K562 (cell line): ENCODE measurements at regions of chr1 and their contacts with region 1.

Region 1: DNA sequence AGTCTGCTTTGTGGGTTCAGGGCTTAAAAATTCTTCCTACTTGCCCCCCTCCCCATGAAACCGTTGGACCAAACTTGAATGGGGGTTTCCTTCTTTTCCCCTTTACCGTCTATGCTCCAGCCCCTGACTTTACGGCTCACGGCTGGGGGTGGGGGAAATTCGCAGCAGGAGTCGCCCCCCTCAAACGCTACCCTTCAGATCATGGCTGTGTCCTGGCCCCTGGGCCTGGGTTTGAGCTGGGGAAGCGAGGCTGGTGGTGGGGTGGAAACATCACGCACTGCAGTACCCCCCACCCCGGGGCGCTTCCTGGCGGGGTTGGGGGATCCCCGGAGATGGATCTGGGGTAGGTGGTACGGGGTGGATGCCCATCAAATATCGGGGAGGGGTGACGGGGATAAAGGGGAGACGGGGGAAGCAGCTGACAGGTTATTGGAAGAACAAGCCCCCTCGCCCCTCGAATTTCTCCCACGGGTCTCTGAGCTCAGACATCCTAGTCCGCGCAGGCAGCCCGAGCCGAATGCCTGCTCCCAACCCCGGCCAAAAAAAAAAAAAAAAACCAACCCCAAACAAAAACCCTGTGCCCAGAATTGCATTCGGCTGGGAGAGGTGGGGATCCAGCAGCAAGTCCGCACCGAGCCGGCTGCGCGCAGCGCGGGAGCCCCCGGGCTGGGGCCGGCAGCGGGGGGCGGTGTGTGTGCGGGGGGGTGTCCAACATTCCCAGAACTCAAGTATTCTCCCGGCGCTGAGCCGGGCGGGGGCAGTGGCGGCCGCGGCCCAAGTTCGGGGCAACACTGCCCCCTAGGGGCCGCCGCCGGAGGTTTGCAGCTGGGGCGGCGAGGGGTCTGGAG is 59.0 kb upstream of the ACOT11 start:
- DNase-seq: peak; percentile 90 to 96 (median 94)
- ATAC-seq: peak; percentile 88
- H3K4me3 ChIP-seq: peak overlapping the region; percentile 59
- H3K27ac ChIP-seq: peak overlapping the region; percentile 94
- H3K4me1 ChIP-seq: peaks cover 11 to 39% of the 10 kb centered on the region in 2 experiments
- H3K27me3 ChIP-seq: peaks cover 0 to 2% of the 10 kb centered on the region in 2 experiments; a peak in 1 of 5 replicates
- CTCF ChIP-seq: peak; percentile 90 to 99 (median 95)
- EP300 ChIP-seq: peak; percentile 44
- POLR2A ChIP-seq: 0 out of 2 replicates have a peak, but pooled peaks have one; percentile 9
- RAD21 ChIP-seq: peak; percentile 99

Region 2: DNA sequence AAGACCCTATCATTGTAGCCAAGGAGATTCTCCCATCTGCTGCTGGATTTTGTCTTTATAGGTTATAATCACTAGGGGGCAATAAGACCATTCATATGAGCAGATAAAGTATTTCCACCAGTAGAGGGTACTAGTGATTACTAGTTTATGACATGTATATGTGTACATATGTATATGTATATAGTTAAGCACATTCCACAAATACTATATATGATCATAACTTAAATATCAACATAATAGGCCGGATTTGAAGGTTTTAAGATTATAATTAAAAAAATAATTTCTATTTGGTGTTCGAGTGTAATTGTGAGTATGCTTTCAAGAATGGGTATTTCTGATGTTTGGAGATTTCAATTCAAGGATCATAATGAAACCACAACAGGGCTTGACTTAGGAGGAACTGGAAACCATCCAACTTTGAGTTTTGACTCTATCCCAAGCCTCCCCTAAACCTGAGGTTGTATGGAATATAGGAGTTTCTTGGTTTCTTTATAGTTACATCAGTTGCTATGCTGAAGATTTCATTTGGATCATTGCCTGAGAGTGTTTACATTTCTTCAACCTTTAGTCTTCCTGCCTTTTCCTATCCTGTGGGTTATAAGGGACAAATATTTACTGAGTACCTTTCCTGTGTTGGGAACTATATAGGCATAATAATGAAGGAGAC is 418.7 kb before region 1 on chr1:
- CTCF ChIA-PET with region 1: interaction called, 17 read pairs
- POLR2A ChIA-PET with region 1: interaction called, 6 read pairs
- in situ Hi-C with region 1: no loop called
- intact Hi-C with region 1: loop called (anchors 1 kb)
- DNase-seq: peak; percentile 57 to 70 (median 64)
- ATAC-seq: peak; percentile 95
- H3K4me3 ChIP-seq: no peak overlapping the region
- H3K27ac ChIP-seq: no peak overlapping the region
- H3K4me1 ChIP-seq: peaks cover 5 to 8% of the 10 kb centered on the region in 2 experiments; a peak in 1 of 5 replicates
- H3K27me3 ChIP-seq: no peaks in the 10 kb centered on the region
- CTCF ChIP-seq: peak; percentile 79 to 100 (median 99)
- EP300 ChIP-seq: no peak
- POLR2A ChIP-seq: no peak
- RAD21 ChIP-seq: peak; percentile 95 to 97

Region 3: GRCh38 chr1:54121482-54122134 is 367.4 kb before region 1 on chr1:
- CTCF ChIA-PET with region 1: interaction called, 3 read pairs
- POLR2A ChIA-PET with region 1: no interaction called
- in situ Hi-C with region 1: no loop called
- intact Hi-C with region 1: loop called (anchors 1 kb)
- DNase-seq: peak; percentile 90 to 94 (median 94)
- ATAC-seq: peak; percentile 96
- H3K4me3 ChIP-seq: peak overlapping the region; percentile 17
- H3K27ac ChIP-seq: no peak overlapping the region
- H3K4me1 ChIP-seq: peaks cover 7 to 21% of the 10 kb centered on the region in 2 experiments; a peak in 4 of 5 replicates
- H3K27me3 ChIP-seq: peaks cover 3 to 18% of the 10 kb centered on the region in 2 experiments; a peak in 3 of 5 replicates
- CTCF ChIP-seq: peak; percentile 91 to 93 (median 92)
- EP300 ChIP-seq: peak; percentile 27; the same call in 1 of the 2 replicates
- POLR2A ChIP-seq: no peak
- RAD21 ChIP-seq: peak; percentile 89 to 93

Region 4: DNA sequence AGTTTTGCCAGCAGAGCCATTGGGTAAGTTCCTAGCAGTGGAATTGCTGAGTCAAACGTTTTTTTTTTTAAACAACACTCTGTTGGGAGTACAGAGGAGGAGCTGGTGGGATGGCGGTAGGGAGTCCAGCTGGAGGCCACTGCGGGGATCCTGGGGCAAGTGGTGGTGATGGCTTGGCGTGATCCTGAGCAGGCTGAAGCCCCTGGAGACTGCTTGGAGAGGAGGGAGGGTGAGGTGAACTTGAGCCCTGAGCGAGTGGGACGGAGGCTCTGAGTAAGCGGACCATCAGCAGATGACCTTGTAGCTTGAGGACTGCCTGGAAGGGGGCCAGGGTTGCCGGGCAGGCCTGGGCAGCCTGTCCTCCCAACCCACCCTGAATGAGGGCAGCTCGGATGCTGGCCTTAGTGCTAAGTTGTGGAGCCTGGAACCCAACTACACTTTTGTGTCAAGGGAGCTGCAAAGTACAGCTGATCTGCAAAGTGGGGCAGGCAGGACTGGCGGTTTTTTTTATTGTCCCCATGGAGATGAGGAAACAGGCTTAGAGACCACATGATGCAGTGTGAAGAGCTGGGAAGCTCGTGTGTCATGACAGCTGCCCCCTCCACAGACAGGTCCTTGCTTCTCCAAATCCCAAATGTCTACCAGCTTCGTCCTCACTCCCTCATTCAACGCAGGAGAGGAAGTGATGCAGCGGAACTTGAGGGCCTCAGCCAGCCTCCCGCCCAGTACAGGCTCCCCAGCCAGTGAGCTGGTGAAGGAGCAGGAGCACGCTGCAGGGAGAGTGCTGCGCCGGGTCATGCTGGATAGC is 268.8 kb before region 1 on chr1:
- CTCF ChIA-PET with region 1: no interaction called
- POLR2A ChIA-PET with region 1: no interaction called
- in situ Hi-C with region 1: no loop called
- intact Hi-C with region 1: loop called (anchors 10 kb)
- DNase-seq: no peak
- ATAC-seq: peak; percentile 10; the same call in 2 of the 3 replicates
- H3K4me3 ChIP-seq: no peak overlapping the region
- H3K27ac ChIP-seq: no peak overlapping the region
- H3K4me1 ChIP-seq: peaks cover 4 to 23% of the 10 kb centered on the region in 2 experiments; a peak in 4 of 5 replicates
- H3K27me3 ChIP-seq: no peaks in the 10 kb centered on the region
- CTCF ChIP-seq: no peak
- EP300 ChIP-seq: no peak
- POLR2A ChIP-seq: peak; percentile 32; the same call in 1 of the 2 replicates
- RAD21 ChIP-seq: no peak

Region 5: DNA sequence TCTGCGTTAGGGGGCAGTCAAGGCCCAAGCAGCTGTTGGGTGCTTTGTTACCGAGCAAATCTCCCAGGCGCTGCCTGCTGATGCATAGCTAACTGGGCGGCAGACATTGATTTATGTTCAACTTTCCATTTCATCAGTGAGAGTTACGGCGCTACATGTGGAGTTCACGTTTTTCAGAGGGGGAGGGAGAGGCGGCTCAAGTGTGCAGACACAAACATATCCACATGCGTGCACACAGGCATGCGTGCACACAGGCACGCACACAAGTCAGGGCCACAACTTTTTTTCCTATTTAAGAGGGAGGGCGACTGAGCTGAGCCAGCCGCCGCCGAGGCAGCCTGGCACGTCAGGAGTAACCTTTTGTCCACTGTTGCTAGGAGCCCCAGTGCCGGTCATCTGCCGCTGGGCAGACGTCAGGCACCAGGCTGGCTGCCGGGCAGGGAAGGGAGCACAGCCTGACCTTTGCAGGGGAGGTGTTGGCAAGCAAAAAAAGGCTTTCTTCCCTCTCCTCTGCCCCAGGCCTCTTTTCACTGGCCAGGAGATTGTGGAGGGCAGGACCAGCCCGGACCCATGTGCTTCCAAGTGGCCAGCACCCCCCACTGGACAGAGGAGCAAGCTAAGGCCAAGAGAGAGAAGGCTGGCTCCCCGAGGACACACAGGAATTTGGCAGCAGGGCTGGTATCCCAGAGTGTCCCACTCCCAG is 215.8 kb before region 1 on chr1:
- CTCF ChIA-PET with region 1: interaction called, 4 read pairs
- POLR2A ChIA-PET with region 1: no interaction called
- in situ Hi-C with region 1: no loop called
- intact Hi-C with region 1: loop called (anchors 1 kb)
- DNase-seq: peak; percentile 69 to 88 (median 77)
- ATAC-seq: peak; percentile 88
- H3K4me3 ChIP-seq: no peak overlapping the region; the same call in 1 of the 2 replicates
- H3K27ac ChIP-seq: peak overlapping the region; percentile 71
- H3K4me1 ChIP-seq: peaks cover 43 to 44% of the 10 kb centered on the region in 2 experiments
- H3K27me3 ChIP-seq: no peaks in the 10 kb centered on the region
- CTCF ChIP-seq: peak; percentile 73 to 83 (median 81); a peak in 5 of 6 replicates
- EP300 ChIP-seq: no peak; the same call in 1 of the 2 replicates
- POLR2A ChIP-seq: no peak
- RAD21 ChIP-seq: peak; percentile 76 to 94

Region 6: DNA sequence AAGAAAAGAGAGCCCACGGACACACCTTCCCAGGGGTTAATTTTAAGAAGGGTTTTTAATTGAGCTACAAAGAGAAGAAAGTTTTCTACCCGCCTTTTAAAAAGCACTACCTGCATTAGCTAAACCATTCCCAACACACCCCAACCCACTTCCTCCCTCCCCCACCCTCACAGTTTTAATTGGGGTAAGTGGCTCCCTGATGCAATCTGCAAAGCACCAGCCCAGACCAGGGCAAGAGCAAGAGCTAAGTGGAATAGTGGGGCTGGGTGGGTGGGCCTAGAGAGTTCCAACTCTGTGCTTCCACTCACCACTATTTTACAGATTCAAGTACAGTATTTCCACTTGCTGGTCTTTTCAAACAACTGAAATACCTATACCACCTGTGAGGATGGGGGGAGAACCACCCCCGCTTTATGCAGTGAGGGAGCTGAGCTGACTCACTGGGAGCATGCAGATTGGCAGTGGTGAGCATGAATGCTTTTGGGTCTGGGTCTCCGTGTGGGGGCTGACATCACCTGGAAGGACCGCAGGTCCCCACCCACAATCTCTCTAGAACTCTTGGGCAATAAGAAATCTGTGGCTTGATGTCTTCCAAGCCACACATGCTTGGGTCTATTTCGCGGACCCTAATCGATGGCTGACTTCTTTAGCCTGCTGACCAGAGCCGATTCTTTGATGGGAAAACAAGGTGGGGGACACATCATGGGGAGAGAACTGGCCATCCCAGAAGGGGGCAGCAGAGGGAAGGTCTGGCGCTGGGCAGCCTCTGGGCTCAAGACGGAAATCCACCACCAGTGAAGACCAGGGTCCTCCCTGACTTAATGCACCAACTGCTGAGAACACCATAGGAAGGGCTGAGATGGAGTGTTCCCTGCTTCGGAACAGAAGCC is 178.3 kb before region 1 on chr1:
- CTCF ChIA-PET with region 1: interaction called, 6 read pairs
- POLR2A ChIA-PET with region 1: no interaction called
- in situ Hi-C with region 1: loop called (anchors 25 kb)
- intact Hi-C with region 1: loop called (anchors 1 kb)
- DNase-seq: peak; percentile 66 to 79 (median 74)
- ATAC-seq: peak; percentile 89
- H3K4me3 ChIP-seq: no peak overlapping the region
- H3K27ac ChIP-seq: no peak overlapping the region
- H3K4me1 ChIP-seq: peaks cover 22 to 33% of the 10 kb centered on the region in 2 experiments
- H3K27me3 ChIP-seq: no peaks in the 10 kb centered on the region
- CTCF ChIP-seq: peak; percentile 77 to 81 (median 79)
- EP300 ChIP-seq: no peak
- POLR2A ChIP-seq: no peak
- RAD21 ChIP-seq: peak; percentile 73 to 90

Region 7: DNA sequence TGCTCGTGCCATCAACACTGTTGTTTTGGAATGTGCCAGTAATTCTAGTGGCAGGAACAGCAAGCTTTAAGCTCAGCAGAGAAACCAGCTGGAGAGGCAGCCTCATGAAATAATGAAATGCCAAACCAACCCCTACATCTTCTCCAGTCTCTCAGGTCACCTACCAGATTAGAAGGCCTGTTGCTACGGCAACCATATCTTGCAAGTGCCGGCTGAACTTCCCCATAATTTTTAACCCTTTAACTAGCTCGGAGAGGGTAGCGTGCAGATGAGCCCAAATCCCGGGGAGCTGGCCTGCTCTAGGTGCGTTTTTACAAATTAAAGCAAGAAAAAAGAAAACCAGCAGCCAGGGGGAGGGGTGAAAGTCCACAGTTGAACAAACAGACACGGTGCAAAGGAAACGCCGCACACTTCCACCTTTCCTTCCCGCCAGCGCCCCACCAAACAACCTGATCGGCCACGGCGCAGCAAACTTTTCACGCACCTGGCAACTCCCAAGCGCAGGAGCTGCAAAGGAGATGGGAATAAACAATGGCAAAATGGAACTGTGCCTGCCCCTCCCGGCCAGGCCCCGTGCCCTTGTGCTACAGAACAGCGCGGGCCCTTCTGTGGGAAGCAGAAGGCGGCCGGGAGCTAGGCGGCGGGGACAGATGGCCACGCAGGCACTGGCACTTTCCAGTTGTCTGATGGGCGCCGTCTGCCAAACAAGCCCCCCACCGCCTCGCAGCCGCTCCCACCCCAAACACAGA is 132.9 kb before region 1 on chr1:
- CTCF ChIA-PET with region 1: interaction called, 8 read pairs
- POLR2A ChIA-PET with region 1: no interaction called
- in situ Hi-C with region 1: no loop called
- intact Hi-C with region 1: loop called (anchors 1 kb)
- DNase-seq: peak in 3 of 4 experiments; percentile 54 to 90 (median 79)
- ATAC-seq: peak; percentile 84
- H3K4me3 ChIP-seq: peak overlapping the region; percentile 6; the same call in 1 of the 2 replicates
- H3K27ac ChIP-seq: peak overlapping the region; percentile 6; the same call in 1 of the 3 replicates
- H3K4me1 ChIP-seq: peaks cover 40 to 54% of the 10 kb centered on the region in 2 experiments
- H3K27me3 ChIP-seq: no peaks in the 10 kb centered on the region
- CTCF ChIP-seq: no peak
- EP300 ChIP-seq: 0 out of 2 replicates have a peak, but pooled peaks have one; percentile 12
- POLR2A ChIP-seq: no peak
- RAD21 ChIP-seq: no peak